PC-3 (cell line): ENCODE measurements at regions of chr10 and their contacts with region 1.

Region 1: GRCh38 chr10:33760056-33760943 is 425.8 kb upstream of the NRP1 start:
- DNase-seq: no peak
- ATAC-seq: no peak
- H3K4me3 ChIP-seq: no peak overlapping the region
- H3K27ac ChIP-seq: no peak overlapping the region
- H3K4me1 ChIP-seq: no peaks in the 10 kb centered on the region
- H3K27me3 ChIP-seq: no peaks in the 10 kb centered on the region
- CTCF ChIP-seq: no peak

Region 2: DNA sequence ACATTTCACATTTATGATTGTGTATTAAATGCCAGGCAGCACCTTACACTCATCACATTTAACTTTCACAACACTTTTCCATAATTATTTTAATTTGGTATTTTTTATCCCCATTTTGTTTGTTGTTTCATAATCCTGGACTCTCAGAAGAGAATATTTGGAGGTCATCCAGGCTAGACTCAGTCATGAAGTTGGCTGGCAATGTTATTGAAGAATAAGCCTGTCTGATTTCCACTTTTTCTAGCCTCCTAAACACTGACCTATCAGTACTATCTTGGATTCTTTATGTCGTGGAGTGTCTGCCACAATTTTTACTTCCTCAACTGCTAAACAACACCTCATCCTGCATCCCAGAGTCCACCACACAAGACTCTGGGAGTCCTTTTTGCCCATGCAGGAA is 53.6 kb before region 1 on chr10:
- CTCF ChIA-PET with region 1: no interaction called
- POLR2A ChIA-PET with region 1: no interaction called
- intact Hi-C with region 1: no loop called
- DNase-seq: peak; percentile 57
- ATAC-seq: no peak
- H3K4me3 ChIP-seq: no peak overlapping the region
- H3K27ac ChIP-seq: peak overlapping the region; percentile 74
- H3K4me1 ChIP-seq: peaks cover 40% of the 10 kb centered on the region
- H3K27me3 ChIP-seq: no peaks in the 10 kb centered on the region
- CTCF ChIP-seq: no peak

Region 3: DNA sequence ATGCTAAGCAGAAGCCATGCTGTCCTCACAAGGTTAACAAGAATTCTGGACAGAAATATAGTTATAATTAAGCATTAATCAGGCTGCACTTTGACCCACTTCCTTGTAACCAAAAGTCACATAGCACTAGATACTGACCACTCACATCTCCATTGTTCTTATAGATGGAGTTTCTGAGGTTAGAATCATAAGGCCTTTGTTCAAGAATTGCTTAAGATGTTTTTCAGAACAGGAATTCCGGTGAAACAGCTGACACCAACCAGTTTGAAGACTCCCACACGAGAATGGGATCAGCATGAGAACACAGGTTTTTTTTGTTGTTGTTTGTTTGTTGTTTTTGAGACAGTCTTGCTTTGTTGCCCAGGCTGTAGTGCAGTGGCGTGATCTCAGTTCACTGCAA is 62.5 kb after region 1 on chr10:
- CTCF ChIA-PET with region 1: interaction called, 10 read pairs
- POLR2A ChIA-PET with region 1: no interaction called
- intact Hi-C with region 1: no loop called
- DNase-seq: no peak
- ATAC-seq: no peak
- H3K4me3 ChIP-seq: no peak overlapping the region
- H3K27ac ChIP-seq: no peak overlapping the region
- H3K4me1 ChIP-seq: no peaks in the 10 kb centered on the region
- H3K27me3 ChIP-seq: no peaks in the 10 kb centered on the region
- CTCF ChIP-seq: no peak

Region 4: DNA sequence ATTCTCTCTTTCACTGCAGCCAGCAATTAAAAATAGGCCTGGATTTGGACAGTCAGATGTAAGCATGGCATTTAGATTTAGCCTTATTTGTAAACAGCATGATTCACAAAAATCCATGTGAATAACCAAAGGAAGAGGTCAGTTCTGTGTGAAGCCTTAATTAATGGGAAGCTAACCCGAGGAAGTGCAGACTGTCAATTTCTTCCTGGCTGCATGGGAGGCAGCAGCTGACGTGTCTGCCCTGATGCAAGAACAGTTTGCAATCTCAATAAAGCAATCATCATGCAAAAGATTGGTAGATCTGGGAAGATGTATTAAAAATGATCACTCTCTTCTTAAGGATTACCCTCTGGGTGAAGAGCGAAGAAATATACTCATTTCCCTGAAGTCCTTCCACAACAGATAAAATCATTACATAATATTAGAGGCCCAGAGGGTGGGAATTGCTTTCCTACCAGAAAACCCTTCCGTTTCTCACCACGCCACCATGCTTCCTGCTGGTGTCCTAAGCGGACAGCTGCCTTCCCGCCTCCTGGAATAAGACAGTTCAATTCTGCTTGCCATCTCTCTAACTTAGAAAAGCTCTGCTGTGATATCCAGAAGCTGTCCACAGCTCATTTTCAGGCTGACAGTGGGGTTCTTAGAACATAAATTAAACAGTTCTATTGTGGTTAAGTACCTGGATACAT is 100.9 kb after region 1 on chr10:
- CTCF ChIA-PET with region 1: no interaction called
- POLR2A ChIA-PET with region 1: no interaction called
- intact Hi-C with region 1: no loop called
- DNase-seq: no peak
- ATAC-seq: no peak
- H3K4me3 ChIP-seq: no peak overlapping the region
- H3K27ac ChIP-seq: no peak overlapping the region
- H3K4me1 ChIP-seq: peaks cover 4% of the 10 kb centered on the region; the same call in 1 of the 2 replicates
- H3K27me3 ChIP-seq: no peaks in the 10 kb centered on the region
- CTCF ChIP-seq: no peak

Region 5: DNA sequence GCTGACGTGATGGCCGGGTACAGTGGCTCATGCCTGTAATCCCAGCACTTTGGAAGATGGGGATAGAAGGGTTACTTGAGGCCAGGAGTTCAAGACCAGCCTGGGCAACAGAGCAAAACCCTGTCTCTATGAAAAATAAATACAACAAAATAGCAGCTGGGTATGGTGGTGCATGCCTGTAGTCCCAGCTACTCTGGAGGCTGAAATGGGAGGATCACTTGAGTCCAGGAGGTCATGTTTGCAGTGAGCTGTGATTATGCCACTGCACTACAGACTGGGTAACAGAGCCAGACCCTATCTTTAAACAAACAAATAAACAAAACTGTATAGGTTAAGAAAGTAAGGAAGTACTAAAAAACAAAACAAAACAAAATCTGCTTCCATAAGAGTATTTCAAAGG is 1336.0 kb after region 1 on chr10:
- CTCF ChIA-PET with region 1: no interaction called
- POLR2A ChIA-PET with region 1: interaction called, 13 read pairs
- intact Hi-C with region 1: no loop called
- DNase-seq: no peak
- ATAC-seq: no peak
- H3K4me3 ChIP-seq: no peak overlapping the region
- H3K27ac ChIP-seq: no peak overlapping the region
- H3K4me1 ChIP-seq: peaks cover under 1% of the 10 kb centered on the region; the same call in 1 of the 2 replicates
- H3K27me3 ChIP-seq: no peaks in the 10 kb centered on the region
- CTCF ChIP-seq: no peak